K562 (cell line): ENCODE measurements at regions of chr18 and their contacts with region 1.

Region 1: DNA sequence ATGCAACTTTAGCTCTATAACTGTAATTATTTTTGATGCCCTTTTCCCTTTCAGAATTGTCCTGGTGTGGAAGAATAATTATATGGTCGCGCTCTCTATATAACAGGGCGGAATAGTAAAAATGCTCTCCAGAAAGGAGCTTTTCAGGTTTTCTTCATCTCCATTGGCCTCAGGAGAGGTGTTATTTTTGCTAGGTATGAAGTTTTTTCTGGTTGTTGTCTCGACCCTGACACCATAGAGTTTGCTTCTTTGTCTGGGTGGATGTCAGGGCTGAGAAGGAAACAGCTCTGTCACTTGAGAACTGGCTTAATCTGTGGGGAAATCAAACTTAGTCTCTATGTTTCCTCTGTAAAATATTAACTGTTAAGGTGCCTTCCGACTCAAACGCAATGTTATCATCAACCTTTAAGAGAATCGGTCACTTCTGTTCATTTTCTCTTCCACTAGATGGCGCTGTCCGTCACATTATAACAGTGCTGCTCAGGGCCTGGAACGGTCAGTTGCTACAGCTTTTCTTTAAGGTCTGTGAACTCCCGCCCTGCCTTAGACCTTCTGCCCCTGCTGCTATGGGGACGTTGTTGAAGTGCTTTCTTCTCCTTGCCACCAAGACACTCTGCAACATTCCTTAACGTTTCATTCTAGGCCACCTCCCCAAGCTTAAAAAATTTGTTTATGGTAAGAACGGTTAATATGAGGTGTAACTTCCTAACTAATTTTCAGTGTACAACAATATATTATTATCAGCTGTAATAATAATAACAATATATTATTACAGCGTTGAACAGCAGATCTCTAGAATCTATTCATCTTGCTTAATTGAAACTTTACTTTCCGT is 23.8 kb upstream of the SERPINB12 start:
- DNase-seq: peak; percentile 24 to 77 (median 34)
- ATAC-seq: peak; percentile 93
- H3K4me3 ChIP-seq: no peak overlapping the region
- H3K27ac ChIP-seq: no peak overlapping the region
- H3K4me1 ChIP-seq: no peaks in the 10 kb centered on the region
- H3K27me3 ChIP-seq: no peaks in the 10 kb centered on the region
- CTCF ChIP-seq: peak; percentile 55 to 68 (median 60)
- EP300 ChIP-seq: no peak
- POLR2A ChIP-seq: no peak
- RAD21 ChIP-seq: peak; percentile 56 to 78

Region 2: GRCh38 chr18:63578357-63578958 is 60.1 kb after region 1 on chr18:
- CTCF ChIA-PET with region 1: interaction called, 9 read pairs
- POLR2A ChIA-PET with region 1: no interaction called
- in situ Hi-C with region 1: no loop called
- intact Hi-C with region 1: loop called (anchors 2 kb)
- DNase-seq: peak; percentile 12 to 35 (median 16)
- ATAC-seq: peak; percentile 72
- H3K4me3 ChIP-seq: no peak overlapping the region
- H3K27ac ChIP-seq: no peak overlapping the region
- H3K4me1 ChIP-seq: no peaks in the 10 kb centered on the region
- H3K27me3 ChIP-seq: no peaks in the 10 kb centered on the region
- CTCF ChIP-seq: peak; percentile 34 to 63 (median 63)
- EP300 ChIP-seq: no peak
- POLR2A ChIP-seq: no peak
- RAD21 ChIP-seq: peak; percentile 38 to 61; a peak in 3 of 4 replicates

Region 3: DNA sequence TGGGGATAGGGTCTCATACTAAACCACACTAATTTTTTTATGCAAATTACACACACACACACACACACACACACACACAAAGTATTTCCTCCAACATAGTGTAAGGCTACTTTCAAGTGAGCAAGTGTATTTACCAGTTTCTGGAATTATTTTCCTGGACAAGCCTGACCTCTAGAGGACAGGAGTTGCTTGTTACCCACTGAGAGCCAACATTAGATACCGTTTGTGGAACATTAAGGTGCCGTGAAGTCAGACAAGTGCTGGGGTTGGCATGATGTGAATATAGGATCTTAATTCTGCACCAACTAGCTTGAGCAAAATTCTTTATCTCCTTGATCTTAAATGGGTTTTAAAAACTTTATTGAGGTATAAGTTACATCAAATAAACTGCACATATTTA is 329.8 kb after region 1 on chr18:
- CTCF ChIA-PET with region 1: no interaction called
- POLR2A ChIA-PET with region 1: no interaction called
- in situ Hi-C with region 1: no loop called
- intact Hi-C with region 1: loop called (anchors 5 kb)
- DNase-seq: peak in 3 of 4 experiments; percentile 5 to 23 (median 6)
- ATAC-seq: no peak
- H3K4me3 ChIP-seq: no peak overlapping the region
- H3K27ac ChIP-seq: no peak overlapping the region
- H3K4me1 ChIP-seq: no peaks in the 10 kb centered on the region
- H3K27me3 ChIP-seq: no peaks in the 10 kb centered on the region
- CTCF ChIP-seq: peak in 2 of 3 experiments; percentile 32 to 33; a peak in 1 of 6 replicates
- EP300 ChIP-seq: no peak
- POLR2A ChIP-seq: no peak
- RAD21 ChIP-seq: peak in 1 of 2 experiments; percentile 39; a peak in 3 of 4 replicates

Region 4: DNA sequence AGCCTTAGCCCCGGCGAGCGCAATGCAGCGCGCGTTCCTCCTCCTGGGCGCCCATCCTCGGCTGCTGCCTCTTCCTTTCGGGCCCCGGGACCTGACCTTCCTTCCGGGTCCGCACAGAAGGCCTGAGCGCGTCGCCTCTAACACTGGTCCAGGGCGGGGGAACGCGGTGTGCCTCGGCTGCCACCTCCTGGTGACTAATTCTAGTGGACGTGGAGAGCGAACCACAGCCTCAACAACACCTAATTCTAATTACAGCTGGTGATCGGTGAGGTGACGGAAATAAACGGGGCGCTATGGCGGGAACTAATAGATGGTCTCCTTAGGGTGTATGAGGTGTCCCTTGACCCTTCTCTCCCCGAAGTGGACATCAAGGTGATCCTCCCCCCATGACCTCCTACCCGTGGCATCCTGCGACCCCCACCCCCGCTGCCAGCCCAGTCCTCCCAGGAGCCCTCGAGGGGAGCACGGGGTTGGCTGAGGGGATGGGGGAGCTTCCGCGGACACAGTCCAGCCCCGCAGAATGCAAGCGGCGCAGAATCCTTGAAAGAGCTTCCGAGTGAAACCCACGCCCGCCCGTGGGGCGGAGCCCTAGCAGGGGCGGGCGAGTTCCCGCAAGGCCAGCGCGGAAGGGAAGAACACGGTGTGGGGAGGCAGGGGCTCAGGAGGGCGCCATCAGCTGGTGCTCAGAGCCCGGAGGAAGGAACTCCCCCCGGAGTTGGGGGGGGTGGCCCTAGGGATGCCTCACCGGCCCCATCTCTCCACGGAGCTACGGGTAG is 417.9 kb after region 1 on chr18:
- CTCF ChIA-PET with region 1: interaction called, 3 read pairs
- POLR2A ChIA-PET with region 1: no interaction called
- in situ Hi-C with region 1: no loop called
- intact Hi-C with region 1: loop called (anchors 5 kb)
- DNase-seq: peak; percentile 14 to 60 (median 24)
- ATAC-seq: peak; percentile 99
- H3K4me3 ChIP-seq: no peak overlapping the region
- H3K27ac ChIP-seq: no peak overlapping the region
- H3K4me1 ChIP-seq: peaks cover 0 to 6% of the 10 kb centered on the region in 2 experiments; a peak in 2 of 5 replicates
- H3K27me3 ChIP-seq: no peaks in the 10 kb centered on the region
- CTCF ChIP-seq: peak; percentile 34 to 48 (median 44); a peak in 5 of 6 replicates
- EP300 ChIP-seq: no peak
- POLR2A ChIP-seq: no peak
- RAD21 ChIP-seq: peak; percentile 38 to 39

Region 5: GRCh38 chr18:63979409-63979920 is 461.1 kb after region 1 on chr18:
- CTCF ChIA-PET with region 1: interaction called, 3 read pairs
- POLR2A ChIA-PET with region 1: no interaction called
- in situ Hi-C with region 1: loop called (anchors 25 kb)
- intact Hi-C with region 1: loop called (anchors 5 kb)
- DNase-seq: peak; percentile 11 to 36 (median 22)
- ATAC-seq: peak; percentile 78
- H3K4me3 ChIP-seq: no peak overlapping the region
- H3K27ac ChIP-seq: no peak overlapping the region
- H3K4me1 ChIP-seq: no peaks in the 10 kb centered on the region
- H3K27me3 ChIP-seq: no peaks in the 10 kb centered on the region
- CTCF ChIP-seq: peak; percentile 47 to 65 (median 56)
- EP300 ChIP-seq: no peak
- POLR2A ChIP-seq: no peak
- RAD21 ChIP-seq: peak; percentile 56 to 66